CD14-positive monocyte (primary cell): ENCODE measurements at regions of chr21 and their contacts with region 1.

Region 1: GRCh38 chr21:25607151-25608043 is at the start of gene MRPL39:
- DNase-seq: peak; percentile 60 to 75 (median 72)
- H3K4me3 ChIP-seq: peak within 1 kb of the TSS; percentile 61 to 90 (median 86)
- H3K4me3 Mint-ChIP-seq: peak within 1 kb of the TSS; percentile 100
- H3K27ac ChIP-seq: peak within 1 kb of the TSS; percentile 66 to 82
- H3K27ac Mint-ChIP-seq: peak within 1 kb of the TSS; percentile 92 to 99 (median 96)
- H3K4me1 ChIP-seq: peaks cover 16 to 23% of the 10 kb centered on the region in 2 donors
- H3K4me1 Mint-ChIP-seq: peaks cover 21% of the 10 kb centered on the region
- H3K27me3 ChIP-seq: no peaks in the 10 kb centered on the region
- H3K27me3 Mint-ChIP-seq: peaks cover 0 to 2% (median 0%) of the 10 kb centered on the region in 3 donors
- CTCF ChIP-seq: no peak
- polyA plus RNA-seq, gene MRPL39: 5.1 to 22.3 (median 15.5) TPM

Region 2: GRCh38 chr21:25708467-25709065 is 101.2 kb after region 1 on chr21:
- intact Hi-C with region 1: loop called (anchors 2 to 5 kb)
- DNase-seq: peak; percentile 13 to 48 (median 41)
- H3K4me3 ChIP-seq: no peak overlapping the region
- H3K4me3 Mint-ChIP-seq: no peak overlapping the region
- H3K27ac ChIP-seq: no peak overlapping the region
- H3K27ac Mint-ChIP-seq: no peak overlapping the region
- H3K4me1 ChIP-seq: no peaks in the 10 kb centered on the region
- H3K4me1 Mint-ChIP-seq: no peaks in the 10 kb centered on the region
- H3K27me3 ChIP-seq: no peaks in the 10 kb centered on the region
- H3K27me3 Mint-ChIP-seq: no peaks in the 10 kb centered on the region
- CTCF ChIP-seq: peak; percentile 94

Region 3: DNA sequence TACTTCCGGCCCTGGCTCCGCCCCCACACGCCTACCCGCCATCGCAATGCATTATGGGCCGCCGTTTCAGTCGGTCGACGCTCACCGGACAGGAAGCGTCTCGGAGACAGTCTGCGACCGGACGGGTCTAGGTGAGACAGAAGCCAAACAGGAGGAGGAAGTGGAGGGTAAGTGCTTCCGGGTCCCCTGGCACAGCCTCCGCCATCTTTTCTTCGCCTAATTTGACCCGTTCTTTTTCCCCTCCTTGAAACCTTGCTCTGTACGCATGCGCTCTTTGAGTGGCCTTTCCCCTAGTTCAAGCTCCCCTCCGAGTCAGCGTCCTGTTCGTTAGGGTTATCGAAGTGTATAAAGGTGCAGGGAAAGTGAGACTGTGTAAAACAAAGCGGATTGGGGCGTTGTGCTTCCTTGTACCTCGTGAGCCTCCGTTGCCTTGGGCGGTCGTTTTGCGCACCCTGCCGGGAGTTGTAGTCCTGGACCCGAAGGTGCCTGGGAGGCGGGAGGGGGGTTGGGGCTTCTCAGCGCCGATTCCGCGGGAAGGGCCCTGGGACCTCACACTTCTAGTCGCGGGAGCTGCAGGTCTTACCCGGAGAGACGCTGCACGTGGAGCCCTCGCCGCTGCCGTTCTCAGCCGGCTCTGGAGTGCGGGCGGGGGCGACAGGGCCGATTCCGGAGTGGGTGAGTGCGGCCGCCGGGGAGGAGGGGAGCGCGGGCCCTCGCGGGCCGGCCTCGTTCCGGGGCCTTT is 127.7 kb after region 1 on chr21 and contains the starts of genes ATP5PF and GABPA:
- intact Hi-C with region 1: loop called in 1 of 2 experiments (anchors 5 kb)
- DNase-seq: peak; percentile 98 to 99 (median 98)
- H3K4me3 ChIP-seq: peak within 1 kb of the TSS; percentile 65 to 93 (median 77)
- H3K4me3 Mint-ChIP-seq: peak within 1 kb of the TSS; percentile 94 to 100
- H3K27ac ChIP-seq: peak within 1 kb of the TSS; percentile 96 to 99
- H3K27ac Mint-ChIP-seq: peak within 1 kb of the TSS; percentile 100
- H3K4me1 ChIP-seq: peaks cover 20 to 33% of the 10 kb centered on the region in 2 donors
- H3K4me1 Mint-ChIP-seq: peaks cover 35% of the 10 kb centered on the region
- H3K27me3 ChIP-seq: no peaks in the 10 kb centered on the region
- H3K27me3 Mint-ChIP-seq: no peaks in the 10 kb centered on the region
- CTCF ChIP-seq: no peak
- polyA plus RNA-seq, gene ATP5PF: 124 to 360 (median 340) TPM
- polyA plus RNA-seq, gene GABPA: 7.1 to 20.1 (median 12.9) TPM

Region 4: GRCh38 chr21:26461500-26461899 is 854.1 kb after region 1 on chr21:
- intact Hi-C with region 1: no loop called
- DNase-seq: no peak
- H3K4me3 ChIP-seq: no peak overlapping the region
- H3K4me3 Mint-ChIP-seq: no peak overlapping the region
- H3K27ac ChIP-seq: no peak overlapping the region
- H3K27ac Mint-ChIP-seq: no peak overlapping the region
- H3K4me1 ChIP-seq: no peaks in the 10 kb centered on the region
- H3K4me1 Mint-ChIP-seq: peaks cover 5% of the 10 kb centered on the region
- H3K27me3 ChIP-seq: no peaks in the 10 kb centered on the region
- H3K27me3 Mint-ChIP-seq: peaks cover 0 to 2% (median 0%) of the 10 kb centered on the region in 3 donors
- CTCF ChIP-seq: no peak

Region 5: GRCh38 chr21:26715878-26716506 is 1108.6 kb after region 1 on chr21:
- intact Hi-C with region 1: loop called in 1 of 2 experiments (anchors 5 kb)
- DNase-seq: peak; percentile 2 to 28 (median 25)
- H3K4me3 ChIP-seq: no peak overlapping the region
- H3K4me3 Mint-ChIP-seq: no peak overlapping the region
- H3K27ac ChIP-seq: no peak overlapping the region
- H3K27ac Mint-ChIP-seq: no peak overlapping the region
- H3K4me1 ChIP-seq: no peaks in the 10 kb centered on the region
- H3K4me1 Mint-ChIP-seq: no peaks in the 10 kb centered on the region
- H3K27me3 ChIP-seq: no peaks in the 10 kb centered on the region
- H3K27me3 Mint-ChIP-seq: peaks cover 0 to 1% (median 1%) of the 10 kb centered on the region in 3 donors
- CTCF ChIP-seq: peak; percentile 77